CD8-positive, alpha-beta T cell (primary cell): ENCODE measurements at regions of chrX and their contacts with region 1.

Region 1: GRCh38 chrX:9708904-9709553 is 56.6 kb downstream of the GPR143 start:
- DNase-seq: peak; percentile 48 to 89 (median 75)
- ATAC-seq: peak; percentile 75
- H3K4me3 ChIP-seq: no peak overlapping the region
- H3K4me3 Mint-ChIP-seq: no peak overlapping the region
- H3K27ac ChIP-seq: no peak overlapping the region
- H3K27ac Mint-ChIP-seq: peak overlapping the region; percentile 27
- H3K4me1 ChIP-seq: peaks cover 4% of the 10 kb centered on the region
- H3K4me1 Mint-ChIP-seq: peaks cover 13% of the 10 kb centered on the region
- H3K27me3 ChIP-seq: no peaks in the 10 kb centered on the region
- H3K27me3 Mint-ChIP-seq: no peaks in the 10 kb centered on the region
- CTCF ChIP-seq: peak; percentile 46

Region 2: DNA sequence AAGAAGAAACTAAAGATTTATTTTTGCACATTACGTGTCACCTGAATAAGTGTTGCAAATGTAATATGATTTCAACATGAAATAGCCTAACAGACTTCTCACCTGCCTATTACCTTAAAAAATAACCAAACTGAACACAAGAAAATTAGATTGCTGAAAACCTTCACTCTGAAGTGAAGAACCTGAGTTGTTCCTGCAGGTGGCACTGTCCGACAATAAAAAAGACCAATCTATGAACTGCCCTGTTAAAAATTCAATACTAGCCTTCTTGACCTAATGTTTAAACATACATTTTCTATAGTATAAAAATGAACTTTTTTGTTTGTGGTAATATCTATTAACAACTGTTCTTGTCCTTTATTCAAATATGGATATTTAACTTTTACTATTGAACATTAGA is 1712.6 kb before region 1 on chrX:
- CTCF ChIA-PET with region 1: no interaction called
- POLR2A ChIA-PET with region 1: no interaction called
- intact Hi-C with region 1: loop called in 1 of 2 experiments (anchors 5 kb)
- DNase-seq: peak in 6 of 9 experiments; percentile 2 to 59 (median 28)
- ATAC-seq: no peak
- H3K4me3 ChIP-seq: no peak overlapping the region
- H3K4me3 Mint-ChIP-seq: no peak overlapping the region
- H3K27ac ChIP-seq: no peak overlapping the region
- H3K27ac Mint-ChIP-seq: no peak overlapping the region
- H3K4me1 ChIP-seq: no peaks in the 10 kb centered on the region
- H3K4me1 Mint-ChIP-seq: no peaks in the 10 kb centered on the region
- H3K27me3 ChIP-seq: no peaks in the 10 kb centered on the region
- H3K27me3 Mint-ChIP-seq: no peaks in the 10 kb centered on the region
- CTCF ChIP-seq: peak; percentile 54

Region 3: GRCh38 chrX:8743126-8743732 is 965.8 kb before region 1 on chrX:
- CTCF ChIA-PET with region 1: interaction called, 4 read pairs
- POLR2A ChIA-PET with region 1: no interaction called
- intact Hi-C with region 1: loop called in 1 of 2 experiments (anchors 1 kb)
- DNase-seq: peak; percentile 20 to 78 (median 59)
- ATAC-seq: peak; percentile 23
- H3K4me3 ChIP-seq: no peak overlapping the region
- H3K4me3 Mint-ChIP-seq: no peak overlapping the region
- H3K27ac ChIP-seq: no peak overlapping the region
- H3K27ac Mint-ChIP-seq: no peak overlapping the region
- H3K4me1 ChIP-seq: no peaks in the 10 kb centered on the region
- H3K4me1 Mint-ChIP-seq: no peaks in the 10 kb centered on the region
- H3K27me3 ChIP-seq: no peaks in the 10 kb centered on the region
- H3K27me3 Mint-ChIP-seq: peaks cover 9% of the 10 kb centered on the region
- CTCF ChIP-seq: peak; percentile 65

Region 4: GRCh38 chrX:8748855-8749254 is 960.2 kb before region 1 on chrX:
- CTCF ChIA-PET with region 1: interaction called, 6 read pairs
- POLR2A ChIA-PET with region 1: no interaction called
- intact Hi-C with region 1: loop called in 1 of 2 experiments (anchors 1 kb)
- DNase-seq: peak in 2 of 9 experiments; percentile 30 to 46
- ATAC-seq: no peak
- H3K4me3 ChIP-seq: no peak overlapping the region
- H3K4me3 Mint-ChIP-seq: no peak overlapping the region
- H3K27ac ChIP-seq: no peak overlapping the region
- H3K27ac Mint-ChIP-seq: no peak overlapping the region
- H3K4me1 ChIP-seq: no peaks in the 10 kb centered on the region
- H3K4me1 Mint-ChIP-seq: peaks cover 3% of the 10 kb centered on the region
- H3K27me3 ChIP-seq: no peaks in the 10 kb centered on the region
- H3K27me3 Mint-ChIP-seq: peaks cover 7% of the 10 kb centered on the region
- CTCF ChIP-seq: peak; percentile 49

Region 5: GRCh38 chrX:8815464-8816065 is 893.5 kb before region 1 on chrX:
- CTCF ChIA-PET with region 1: interaction called, 6 read pairs
- POLR2A ChIA-PET with region 1: no interaction called
- intact Hi-C with region 1: loop called (anchors 1 kb)
- DNase-seq: peak in 3 of 9 experiments; percentile 25 to 57 (median 48)
- ATAC-seq: peak; percentile 31
- H3K4me3 ChIP-seq: no peak overlapping the region
- H3K4me3 Mint-ChIP-seq: no peak overlapping the region
- H3K27ac ChIP-seq: no peak overlapping the region
- H3K27ac Mint-ChIP-seq: no peak overlapping the region
- H3K4me1 ChIP-seq: no peaks in the 10 kb centered on the region
- H3K4me1 Mint-ChIP-seq: no peaks in the 10 kb centered on the region
- H3K27me3 ChIP-seq: no peaks in the 10 kb centered on the region
- H3K27me3 Mint-ChIP-seq: peaks cover 3% of the 10 kb centered on the region
- CTCF ChIP-seq: peak; percentile 75

Region 6: DNA sequence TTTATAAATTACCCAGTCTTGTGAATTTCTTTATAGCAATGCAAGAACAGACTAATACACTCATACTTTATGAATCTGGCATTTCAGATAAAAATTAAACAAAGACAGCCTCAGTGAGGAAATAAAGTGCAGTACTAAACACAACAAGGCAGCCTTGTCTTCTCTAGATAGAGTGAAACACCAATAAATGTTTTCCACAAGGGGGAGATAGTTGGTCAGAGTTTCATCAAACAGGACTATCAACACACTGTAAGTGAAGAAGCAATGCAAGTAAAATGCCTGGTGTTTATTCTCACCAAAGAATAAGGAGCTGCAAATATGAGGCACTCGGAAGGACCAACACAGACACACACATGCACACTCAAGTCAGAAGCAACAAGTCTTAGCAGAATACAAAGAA is 737.9 kb before region 1 on chrX:
- CTCF ChIA-PET with region 1: interaction called, 3 read pairs
- POLR2A ChIA-PET with region 1: no interaction called
- intact Hi-C with region 1: loop called (anchors 1 kb)
- DNase-seq: peak in 2 of 9 experiments; percentile 51 to 67
- ATAC-seq: peak; percentile 57
- H3K4me3 ChIP-seq: no peak overlapping the region
- H3K4me3 Mint-ChIP-seq: no peak overlapping the region
- H3K27ac ChIP-seq: no peak overlapping the region
- H3K27ac Mint-ChIP-seq: no peak overlapping the region
- H3K4me1 ChIP-seq: no peaks in the 10 kb centered on the region
- H3K4me1 Mint-ChIP-seq: peaks cover 2% of the 10 kb centered on the region
- H3K27me3 ChIP-seq: no peaks in the 10 kb centered on the region
- H3K27me3 Mint-ChIP-seq: no peaks in the 10 kb centered on the region
- CTCF ChIP-seq: peak; percentile 43

Region 7: GRCh38 chrX:9055354-9055753 is 653.7 kb before region 1 on chrX:
- CTCF ChIA-PET with region 1: no interaction called
- POLR2A ChIA-PET with region 1: no interaction called
- intact Hi-C with region 1: loop called in 1 of 2 experiments (anchors 5 kb)
- DNase-seq: no peak
- ATAC-seq: no peak
- H3K4me3 ChIP-seq: no peak overlapping the region
- H3K4me3 Mint-ChIP-seq: no peak overlapping the region
- H3K27ac ChIP-seq: no peak overlapping the region
- H3K27ac Mint-ChIP-seq: no peak overlapping the region
- H3K4me1 ChIP-seq: no peaks in the 10 kb centered on the region
- H3K4me1 Mint-ChIP-seq: no peaks in the 10 kb centered on the region
- H3K27me3 ChIP-seq: no peaks in the 10 kb centered on the region
- H3K27me3 Mint-ChIP-seq: no peaks in the 10 kb centered on the region
- CTCF ChIP-seq: no peak